Activated CD4-positive, alpha-beta T cell treated with anti-CD3 and anti-CD28 coated beads for 36 hours (primary cell): ENCODE measurements at regions of chr13 and their contacts with region 1.

Region 1: DNA sequence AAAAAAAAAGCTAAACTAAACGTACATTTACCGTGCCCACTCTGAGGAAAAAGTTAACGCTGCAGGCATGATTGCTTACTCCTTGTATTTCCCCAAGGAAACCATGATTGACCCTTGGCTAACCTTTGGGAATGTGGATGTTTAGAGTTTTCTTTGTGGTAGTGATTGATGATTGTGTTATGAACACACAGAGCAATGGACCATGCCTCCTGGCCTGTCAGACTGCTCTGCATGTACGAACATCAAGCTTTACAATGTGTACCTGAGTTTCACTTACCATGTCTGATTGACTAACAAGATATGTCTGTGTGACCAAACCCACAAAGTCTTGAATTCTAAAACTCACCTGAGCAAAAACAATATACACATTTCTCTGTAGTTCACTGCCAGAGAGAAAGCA is 35.1 kb downstream of the MYCBP2 start:
- DNase-seq: no peak
- ATAC-seq: peak; percentile 14
- H3K4me3 Mint-ChIP-seq: no peak overlapping the region
- H3K27ac Mint-ChIP-seq: peak overlapping the region; percentile 68
- H3K4me1 Mint-ChIP-seq: peaks cover 35% of the 10 kb centered on the region
- H3K27me3 Mint-ChIP-seq: no peaks in the 10 kb centered on the region

Region 2: DNA sequence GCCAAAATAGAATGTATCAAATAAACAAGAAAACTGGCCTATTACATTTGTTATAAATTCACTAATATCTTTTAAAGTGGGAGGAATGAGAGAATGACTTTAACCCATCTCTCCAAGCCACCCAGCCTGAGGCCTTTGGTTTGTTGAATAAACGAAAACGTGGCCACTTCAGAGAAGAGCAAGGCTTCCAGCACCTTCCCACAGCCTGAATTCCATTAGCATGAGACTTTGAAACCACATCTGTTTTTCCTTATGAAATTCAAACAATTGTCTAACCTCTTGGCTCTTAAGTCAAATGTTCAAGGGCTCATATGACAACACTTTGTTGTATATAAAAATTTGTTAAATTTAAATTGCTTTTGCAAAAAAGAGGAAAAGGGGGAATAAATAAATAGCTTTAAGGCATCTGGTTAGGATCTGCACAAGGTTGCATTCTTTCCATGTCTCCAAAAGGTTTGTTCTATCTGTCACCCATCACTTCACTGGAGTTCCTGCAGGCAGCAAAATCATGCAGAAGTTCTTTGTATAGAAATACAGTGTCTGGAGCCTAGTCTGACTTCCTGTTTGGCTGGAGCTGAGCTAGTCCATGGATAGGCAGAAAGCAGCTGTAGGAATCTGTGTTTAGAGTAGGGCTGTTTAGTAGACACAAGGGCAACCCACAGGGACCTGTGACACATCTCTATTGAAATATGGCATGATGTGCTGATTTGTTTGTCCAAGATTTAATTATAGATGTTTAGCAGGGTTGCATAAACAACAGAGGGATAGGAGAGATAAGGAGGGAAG is 907.9 kb before region 1 on chr13:
- CTCF ChIA-PET with region 1: no interaction called
- POLR2A ChIA-PET with region 1: no interaction called
- intact Hi-C with region 1: no loop called
- DNase-seq: no peak
- ATAC-seq: no peak
- H3K4me3 Mint-ChIP-seq: no peak overlapping the region
- H3K27ac Mint-ChIP-seq: no peak overlapping the region
- H3K4me1 Mint-ChIP-seq: no peaks in the 10 kb centered on the region
- H3K27me3 Mint-ChIP-seq: no peaks in the 10 kb centered on the region

Region 3: GRCh38 chr13:77184455-77184854 is 107.3 kb before region 1 on chr13:
- CTCF ChIA-PET with region 1: no interaction called
- POLR2A ChIA-PET with region 1: no interaction called
- intact Hi-C with region 1: loop called in 1 of 2 experiments (anchors 1 kb)
- DNase-seq: peak; percentile 74
- ATAC-seq: peak; percentile 99
- H3K4me3 Mint-ChIP-seq: no peak overlapping the region
- H3K27ac Mint-ChIP-seq: peak overlapping the region; percentile 79
- H3K4me1 Mint-ChIP-seq: peaks cover 17% of the 10 kb centered on the region
- H3K27me3 Mint-ChIP-seq: no peaks in the 10 kb centered on the region

Region 4: DNA sequence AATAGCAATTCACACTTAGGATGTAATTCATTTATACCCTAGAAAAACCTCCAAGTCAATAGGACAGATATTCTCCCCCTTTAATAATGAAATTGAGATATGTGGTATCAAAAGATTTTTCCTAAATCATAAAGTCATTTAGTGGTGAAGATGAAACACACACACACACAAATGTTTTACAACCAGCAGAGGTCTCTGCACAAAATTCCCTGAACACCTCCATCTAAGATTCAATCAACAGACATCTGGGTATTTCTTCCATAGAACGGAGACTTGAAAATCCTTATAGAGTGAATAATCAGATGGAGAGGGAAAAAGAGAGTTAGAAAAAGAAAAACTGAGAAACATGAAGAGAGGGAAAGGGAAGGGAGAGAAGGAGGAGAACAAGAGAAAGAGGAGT is 17.6 kb before region 1 on chr13:
- CTCF ChIA-PET with region 1: interaction called, 3 read pairs
- POLR2A ChIA-PET with region 1: interaction called, 12 read pairs
- intact Hi-C with region 1: no loop called
- DNase-seq: no peak
- ATAC-seq: no peak
- H3K4me3 Mint-ChIP-seq: no peak overlapping the region
- H3K27ac Mint-ChIP-seq: no peak overlapping the region
- H3K4me1 Mint-ChIP-seq: peaks cover 16% of the 10 kb centered on the region
- H3K27me3 Mint-ChIP-seq: no peaks in the 10 kb centered on the region

Region 5: DNA sequence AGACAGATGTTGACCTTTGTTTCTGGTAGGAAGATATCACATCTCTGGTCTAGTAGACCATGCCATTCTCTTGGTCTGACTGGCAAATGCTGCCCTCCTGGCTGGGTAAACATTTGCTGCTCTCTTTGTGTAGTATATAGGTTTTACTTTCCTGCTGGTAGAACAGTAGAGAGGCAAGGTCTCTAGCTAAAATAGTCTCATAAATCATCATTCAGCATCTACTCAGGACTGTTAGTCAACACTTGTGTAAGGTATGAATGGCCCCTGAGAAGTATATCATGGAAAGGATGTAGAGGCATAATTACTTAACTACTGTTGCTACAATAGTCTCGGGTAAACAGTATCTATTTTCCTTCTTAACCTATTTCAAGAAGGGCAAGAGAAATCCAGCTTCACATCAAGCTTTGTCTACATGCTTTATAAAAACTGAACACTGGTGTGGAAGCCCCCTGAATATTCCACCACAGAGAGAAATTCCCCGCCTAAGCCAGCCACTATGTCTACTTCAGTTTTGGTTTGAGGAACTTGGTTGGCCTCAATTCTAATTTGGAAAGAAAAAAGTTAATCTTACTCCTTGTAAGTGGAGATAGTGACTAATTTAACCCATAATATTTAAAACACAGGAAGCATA is 53.5 kb after region 1 on chr13:
- CTCF ChIA-PET with region 1: no interaction called
- POLR2A ChIA-PET with region 1: no interaction called
- intact Hi-C with region 1: loop called in 1 of 2 experiments (anchors 1 kb)
- DNase-seq: peak; percentile 33
- ATAC-seq: peak; percentile 90
- H3K4me3 Mint-ChIP-seq: peak overlapping the region; percentile 11
- H3K27ac Mint-ChIP-seq: peak overlapping the region; percentile 72
- H3K4me1 Mint-ChIP-seq: peaks cover 15% of the 10 kb centered on the region
- H3K27me3 Mint-ChIP-seq: no peaks in the 10 kb centered on the region

Region 6: DNA sequence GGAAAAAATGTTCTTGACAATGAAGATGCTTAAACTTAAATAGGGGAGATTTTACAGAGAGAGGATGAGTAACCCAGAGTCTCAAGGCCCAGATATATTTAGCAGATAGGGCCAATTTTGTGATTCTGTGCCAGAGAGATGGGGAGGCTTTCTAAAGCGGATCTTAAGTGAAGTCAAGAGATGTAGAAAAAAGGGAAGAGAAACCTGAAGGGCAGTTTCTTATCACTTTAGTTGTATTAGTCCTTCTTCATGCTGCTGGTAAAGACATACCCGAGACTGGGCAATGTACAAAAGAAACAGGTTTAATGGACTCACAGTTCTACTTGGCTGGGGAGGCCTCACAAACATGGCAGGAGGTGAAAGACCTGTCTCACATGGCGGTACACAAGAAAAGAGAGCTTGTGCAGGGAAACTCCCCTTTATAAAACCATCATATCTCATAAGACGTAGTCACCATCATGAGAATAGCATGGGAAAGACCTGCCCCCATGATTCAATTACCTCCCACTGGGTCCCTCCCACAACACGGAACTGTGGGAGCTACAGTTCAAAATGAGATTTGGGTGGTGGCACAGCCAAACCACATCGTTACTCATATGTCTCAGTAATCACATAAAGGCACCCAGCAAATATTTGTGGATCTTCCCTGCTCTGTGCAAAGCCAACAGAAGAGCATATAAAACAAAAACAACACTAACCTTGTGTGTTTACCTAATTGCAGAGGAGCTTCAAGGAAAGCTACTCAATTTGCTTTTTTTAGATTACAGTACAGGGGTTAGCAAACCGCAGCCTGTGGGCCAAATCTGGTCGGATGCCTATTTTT is 137.8 kb after region 1 on chr13:
- CTCF ChIA-PET with region 1: no interaction called
- POLR2A ChIA-PET with region 1: no interaction called
- intact Hi-C with region 1: loop called in 1 of 2 experiments (anchors 1 kb)
- DNase-seq: peak; percentile 74
- ATAC-seq: peak; percentile 88
- H3K4me3 Mint-ChIP-seq: no peak overlapping the region
- H3K27ac Mint-ChIP-seq: peak overlapping the region; percentile 81
- H3K4me1 Mint-ChIP-seq: peaks cover 17% of the 10 kb centered on the region
- H3K27me3 Mint-ChIP-seq: peaks cover under 1% of the 10 kb centered on the region